Adrenal gland (tissue), 19 donors: ENCODE measurements at regions of chr5 and their contacts with region 1.

Region 1: DNA sequence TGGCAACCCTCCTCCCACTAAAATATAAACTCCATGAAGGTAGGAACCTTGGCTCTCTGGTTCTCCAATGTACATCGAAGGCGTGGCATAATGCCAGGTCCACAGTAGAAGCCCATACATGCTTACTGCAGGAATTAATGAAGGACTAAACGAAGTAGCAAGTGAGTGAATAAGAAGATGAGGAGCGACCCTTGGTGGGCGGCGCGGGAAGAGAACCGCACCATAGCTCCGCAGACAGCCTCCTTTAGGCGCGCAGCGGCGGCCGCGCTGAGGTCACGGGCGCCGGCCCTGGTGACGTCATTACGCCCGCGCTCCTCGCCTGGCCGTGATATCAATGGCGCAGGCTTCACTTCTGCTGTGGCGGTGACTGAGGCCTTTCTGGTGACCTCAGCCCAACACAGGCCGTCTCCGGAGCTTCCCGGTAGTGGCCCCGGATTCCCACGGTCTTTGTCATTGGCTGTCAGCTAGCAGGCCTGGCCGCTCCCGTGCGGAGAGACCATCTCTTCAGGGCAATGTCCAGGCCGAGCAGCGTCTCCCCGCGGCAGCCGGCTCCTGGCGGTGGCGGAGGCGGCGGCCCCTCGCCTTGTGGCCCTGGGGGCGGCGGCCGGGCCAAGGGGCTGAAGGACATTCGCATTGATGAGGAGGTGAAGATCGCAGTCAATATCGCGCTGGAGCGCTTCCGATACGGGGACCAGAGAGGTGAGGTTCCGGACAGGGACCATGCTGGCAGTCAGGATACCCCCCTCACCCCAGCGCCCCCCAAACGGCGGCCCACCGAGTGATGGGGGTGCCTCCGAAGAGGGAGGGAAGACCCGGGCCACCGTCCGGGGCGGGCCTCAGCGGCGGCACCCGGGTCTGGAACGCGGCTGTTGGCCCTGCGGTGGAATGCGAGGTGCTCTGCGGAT is at the start of gene YTHDC2:
- DNase-seq: peak; percentile 86 to 95 (median 91)
- H3K4me3 ChIP-seq: peak within 1 kb of the TSS; percentile 7 to 99 (median 69)
- H3K27ac ChIP-seq: peak within 1 kb of the TSS; percentile 58 to 96 (median 95)
- H3K4me1 ChIP-seq: peaks cover 0 to 31% of the 10 kb centered on the region in 2 donors
- H3K27me3 ChIP-seq: no peaks in the 10 kb centered on the region
- CTCF ChIP-seq: peak in 1 of 6 experiments; percentile 8
- POLR2A ChIP-seq: peak; percentile 56 to 84
- total RNA-seq, gene YTHDC2: 10.3 to 34.9 (median 23.6) TPM

Region 2: GRCh38 chr5:112983363-112983762 is 530.3 kb before region 1 on chr5:
- intact Hi-C with region 1: loop called in 1 of 2 experiments (anchors 10 kb)
- DNase-seq: no peak
- H3K4me3 ChIP-seq: no peak overlapping the region
- H3K27ac ChIP-seq: no peak overlapping the region
- H3K4me1 ChIP-seq: peaks cover 4 to 18% of the 10 kb centered on the region in 2 donors
- H3K27me3 ChIP-seq: no peaks in the 10 kb centered on the region
- CTCF ChIP-seq: no peak
- POLR2A ChIP-seq: no peak